CD8-positive, alpha-beta memory T cell (primary cell): ENCODE measurements at regions of chrX and their contacts with region 1.

Region 1: DNA sequence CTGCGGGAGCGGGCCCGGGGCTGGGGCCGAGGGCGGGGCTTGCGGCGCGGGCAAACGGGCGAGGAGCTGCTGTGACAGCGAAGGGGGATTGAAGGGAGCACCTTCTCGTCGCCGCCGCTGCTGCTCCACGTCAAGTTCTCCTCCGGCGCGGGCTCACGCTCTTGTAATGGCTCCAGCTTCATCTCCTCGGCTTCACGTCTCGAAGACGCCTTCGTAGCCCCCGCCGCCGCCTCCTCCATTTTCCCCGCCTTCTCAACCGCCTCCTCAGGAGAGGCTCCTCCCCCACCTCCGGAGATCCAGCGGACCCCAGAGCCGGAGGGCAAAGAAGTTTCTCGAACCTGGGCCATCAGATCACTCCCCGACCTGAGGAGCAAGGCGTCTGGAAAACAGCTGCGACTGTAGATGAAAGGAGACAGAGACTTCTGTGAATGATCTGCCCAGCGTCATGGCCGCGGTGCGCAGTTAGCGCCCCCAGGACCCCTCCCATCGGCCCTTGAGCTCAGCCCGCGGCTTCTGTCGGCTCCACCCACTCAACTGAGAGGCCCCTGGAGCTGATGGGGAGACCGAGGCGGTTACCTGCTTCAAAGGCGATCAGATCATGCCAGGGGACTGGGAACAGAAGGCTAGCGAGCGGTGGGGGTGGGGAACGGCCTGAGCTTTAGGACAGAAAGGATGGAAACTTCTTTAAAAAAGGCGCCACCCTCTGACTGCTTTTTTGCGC is 895 bp downstream of the USP51 start:
- DNase-seq: peak; percentile 37 to 77 (median 69)
- H3K4me3 ChIP-seq: peak overlapping the region; percentile 81
- H3K4me3 Mint-ChIP-seq: peak overlapping the region; percentile 93 to 97 (median 93)
- H3K27ac ChIP-seq: peak overlapping the region; percentile 78
- H3K27ac Mint-ChIP-seq: peak overlapping the region; percentile 85 to 97 (median 96)
- H3K4me1 ChIP-seq: peaks cover 6% of the 10 kb centered on the region
- H3K4me1 Mint-ChIP-seq: peaks cover 8 to 16% (median 10%) of the 10 kb centered on the region in 3 donors
- H3K27me3 ChIP-seq: no peaks in the 10 kb centered on the region
- H3K27me3 Mint-ChIP-seq: peaks cover 0 to 2% of the 10 kb centered on the region in 2 donors

Region 2: DNA sequence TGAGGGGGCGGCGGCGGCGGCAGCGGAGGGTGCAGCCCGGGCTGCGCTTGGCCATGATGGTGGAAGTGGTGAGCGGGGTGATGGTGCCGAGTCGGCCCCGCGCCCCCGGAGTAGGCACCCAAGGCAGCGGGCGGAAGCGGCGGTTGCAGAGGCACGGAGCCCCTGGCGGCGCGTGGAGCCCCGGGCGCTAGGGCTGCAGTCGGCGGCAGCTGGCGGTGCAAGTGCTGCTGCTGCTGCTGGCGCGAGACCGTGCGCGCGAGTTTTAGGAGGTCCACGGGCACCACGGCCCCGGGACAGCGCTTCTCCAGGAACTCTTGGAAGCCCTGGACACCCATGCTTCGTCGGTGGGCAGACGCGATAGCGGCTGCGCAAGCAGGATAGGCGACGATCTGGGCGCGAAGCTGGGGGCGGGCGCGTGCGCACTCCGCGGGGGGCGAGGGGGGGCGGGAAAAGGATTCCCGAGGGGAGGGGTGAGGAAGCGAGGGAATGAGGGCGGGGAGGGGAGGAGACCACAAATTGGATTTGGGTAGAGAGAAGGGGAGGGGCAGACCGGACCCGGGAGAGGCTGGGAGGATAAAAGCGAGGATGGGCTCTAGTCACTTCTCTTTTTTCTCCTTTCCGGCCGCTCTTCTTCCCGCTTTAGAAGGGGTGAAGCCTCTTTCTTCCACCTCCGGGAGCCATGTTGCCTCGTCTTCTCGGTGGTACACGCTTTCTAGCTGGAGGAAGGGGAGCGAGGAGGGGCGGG is 1305.7 kb before region 1 on chrX and contains the start of gene FAM120C:
- CTCF ChIA-PET with region 1: no interaction called
- POLR2A ChIA-PET with region 1: interaction called, 13 read pairs
- DNase-seq: peak; percentile 26 to 71 (median 64)
- H3K4me3 ChIP-seq: peak within 1 kb of the TSS; percentile 49
- H3K4me3 Mint-ChIP-seq: peak within 1 kb of the TSS; percentile 83 to 94 (median 86)
- H3K27ac ChIP-seq: peak within 1 kb of the TSS; percentile 79
- H3K27ac Mint-ChIP-seq: peak within 1 kb of the TSS; percentile 78 to 94 (median 90)
- H3K4me1 ChIP-seq: peaks cover 38% of the 10 kb centered on the region
- H3K4me1 Mint-ChIP-seq: peaks cover 38 to 46% (median 41%) of the 10 kb centered on the region in 3 donors
- H3K27me3 ChIP-seq: no peaks in the 10 kb centered on the region
- H3K27me3 Mint-ChIP-seq: peaks cover 0 to 8% of the 10 kb centered on the region in 2 donors
- total RNA-seq, gene FAM120C: 8.2 to 9.0 TPM

Region 3: GRCh38 chrX:55240788-55241340 is 247.9 kb before region 1 on chrX:
- CTCF ChIA-PET with region 1: no interaction called
- POLR2A ChIA-PET with region 1: no interaction called
- DNase-seq: no peak
- H3K4me3 ChIP-seq: no peak overlapping the region
- H3K4me3 Mint-ChIP-seq: no peak overlapping the region
- H3K27ac ChIP-seq: no peak overlapping the region
- H3K27ac Mint-ChIP-seq: no peak overlapping the region
- H3K4me1 ChIP-seq: no peaks in the 10 kb centered on the region
- H3K4me1 Mint-ChIP-seq: no peaks in the 10 kb centered on the region
- H3K27me3 ChIP-seq: no peaks in the 10 kb centered on the region
- H3K27me3 Mint-ChIP-seq: peaks cover 12 to 21% of the 10 kb centered on the region in 2 donors

Region 4: GRCh38 chrX:55379396-55379795 is 109.4 kb before region 1 on chrX:
- CTCF ChIA-PET with region 1: no interaction called
- POLR2A ChIA-PET with region 1: no interaction called
- DNase-seq: no peak
- H3K4me3 ChIP-seq: no peak overlapping the region
- H3K4me3 Mint-ChIP-seq: no peak overlapping the region
- H3K27ac ChIP-seq: no peak overlapping the region
- H3K27ac Mint-ChIP-seq: no peak overlapping the region
- H3K4me1 ChIP-seq: no peaks in the 10 kb centered on the region
- H3K4me1 Mint-ChIP-seq: no peaks in the 10 kb centered on the region
- H3K27me3 ChIP-seq: no peaks in the 10 kb centered on the region
- H3K27me3 Mint-ChIP-seq: peaks cover 10 to 20% of the 10 kb centered on the region in 2 donors

Region 5: GRCh38 chrX:55451990-55452832 is 36.5 kb before region 1 on chrX and contains the start of gene MAGEH1:
- CTCF ChIA-PET with region 1: interaction called, 8 read pairs
- POLR2A ChIA-PET with region 1: interaction called, 20 read pairs
- DNase-seq: peak; percentile 59 to 86 (median 76)
- H3K4me3 ChIP-seq: peak within 1 kb of the TSS; percentile 80
- H3K4me3 Mint-ChIP-seq: peak within 1 kb of the TSS; percentile 93 to 98 (median 96)
- H3K27ac ChIP-seq: peak within 1 kb of the TSS; percentile 78
- H3K27ac Mint-ChIP-seq: peak within 1 kb of the TSS; percentile 87 to 97 (median 95)
- H3K4me1 ChIP-seq: peaks cover 4% of the 10 kb centered on the region
- H3K4me1 Mint-ChIP-seq: peaks cover 17 to 24% (median 19%) of the 10 kb centered on the region in 3 donors
- H3K27me3 ChIP-seq: no peaks in the 10 kb centered on the region
- H3K27me3 Mint-ChIP-seq: no peaks in the 10 kb centered on the region
- total RNA-seq, gene MAGEH1: 15.4 to 16.7 TPM

Region 6: GRCh38 chrX:55717521-55718497 is 229.1 kb after region 1 on chrX and contains the start of gene RRAGB:
- CTCF ChIA-PET with region 1: interaction called, 6 read pairs
- POLR2A ChIA-PET with region 1: interaction called, 14 read pairs
- DNase-seq: peak; percentile 81 to 95 (median 88)
- H3K4me3 ChIP-seq: peak within 1 kb of the TSS; percentile 81
- H3K4me3 Mint-ChIP-seq: peak within 1 kb of the TSS; percentile 69 to 94 (median 85)
- H3K27ac ChIP-seq: peak within 1 kb of the TSS; percentile 83
- H3K27ac Mint-ChIP-seq: peak within 1 kb of the TSS; percentile 75 to 98 (median 94)
- H3K4me1 ChIP-seq: peaks cover 13% of the 10 kb centered on the region
- H3K4me1 Mint-ChIP-seq: peaks cover 22 to 41% (median 26%) of the 10 kb centered on the region in 3 donors
- H3K27me3 ChIP-seq: no peaks in the 10 kb centered on the region
- H3K27me3 Mint-ChIP-seq: peaks cover 0 to 7% of the 10 kb centered on the region in 2 donors
- total RNA-seq, gene RRAGB: 6.8 to 7.8 TPM

Region 7: GRCh38 chrX:55731826-55732225 is 243.1 kb after region 1 on chrX:
- CTCF ChIA-PET with region 1: no interaction called
- POLR2A ChIA-PET with region 1: no interaction called
- DNase-seq: no peak
- H3K4me3 ChIP-seq: no peak overlapping the region
- H3K4me3 Mint-ChIP-seq: no peak overlapping the region
- H3K27ac ChIP-seq: no peak overlapping the region
- H3K27ac Mint-ChIP-seq: no peak overlapping the region
- H3K4me1 ChIP-seq: no peaks in the 10 kb centered on the region
- H3K4me1 Mint-ChIP-seq: peaks cover 4 to 36% (median 8%) of the 10 kb centered on the region in 3 donors
- H3K27me3 ChIP-seq: no peaks in the 10 kb centered on the region
- H3K27me3 Mint-ChIP-seq: peaks cover 0 to 3% of the 10 kb centered on the region in 2 donors